ENCODE measurements at regions of chr12 and their contacts with region 1.

Region 1: DNA sequence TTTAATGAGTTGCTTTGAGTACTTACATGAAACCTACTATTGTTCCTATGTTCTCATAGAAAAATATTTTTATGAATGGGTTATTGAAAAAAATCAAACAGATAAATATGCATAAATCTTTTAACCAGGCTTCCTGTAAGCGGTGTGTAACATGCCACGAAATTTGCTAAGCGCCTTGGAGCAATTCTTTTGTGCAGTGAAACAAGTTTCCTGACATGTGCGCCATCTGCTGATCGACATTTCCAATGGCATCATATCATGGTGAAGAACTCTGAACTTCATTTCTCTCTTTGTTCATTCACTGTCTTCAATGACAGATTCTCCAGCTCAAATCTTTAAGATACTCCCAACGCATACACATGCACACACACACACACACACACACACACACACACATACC is 145.6 kb upstream of the NAV3 start:
- DNase-seq: peak; percentile 49
- H3K4me3 ChIP-seq: no peak overlapping the region
- CTCF ChIP-seq: peak; percentile 69

Region 2: DNA sequence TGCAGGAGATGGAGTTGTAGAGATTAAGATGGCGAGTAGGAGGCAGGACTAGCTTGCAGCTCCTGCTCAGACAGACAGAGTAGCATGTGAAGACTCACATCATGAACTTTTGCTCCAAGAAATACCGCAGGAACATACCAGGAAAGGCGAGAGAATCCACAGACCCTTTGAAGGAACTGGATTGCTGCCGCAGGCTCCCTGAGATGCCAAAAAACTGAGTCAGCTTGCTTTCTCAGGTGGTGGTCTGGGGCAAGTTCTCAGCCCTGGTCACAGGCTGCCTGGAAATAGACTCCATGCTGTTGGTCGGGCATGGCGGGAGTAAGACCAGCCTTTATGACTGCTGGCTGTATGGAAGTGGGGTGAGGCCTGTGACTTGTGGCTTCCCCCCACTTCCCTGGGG is 18.0 kb before region 1 on chr12:
- CTCF ChIA-PET with region 1: interaction called, 10 read pairs
- POLR2A ChIA-PET with region 1: no interaction called
- DNase-seq: no peak
- H3K4me3 ChIP-seq: no peak overlapping the region
- CTCF ChIP-seq: no peak

Region 3: GRCh38 chr12:77696183-77696582 is 11.1 kb after region 1 on chr12:
- CTCF ChIA-PET with region 1: interaction called, 11 read pairs
- POLR2A ChIA-PET with region 1: no interaction called
- DNase-seq: no peak
- H3K4me3 ChIP-seq: no peak overlapping the region
- CTCF ChIP-seq: no peak